Thyroid gland (tissue), 4 donors: ENCODE measurements at regions of chr9 and their contacts with region 1.

Region 1: DNA sequence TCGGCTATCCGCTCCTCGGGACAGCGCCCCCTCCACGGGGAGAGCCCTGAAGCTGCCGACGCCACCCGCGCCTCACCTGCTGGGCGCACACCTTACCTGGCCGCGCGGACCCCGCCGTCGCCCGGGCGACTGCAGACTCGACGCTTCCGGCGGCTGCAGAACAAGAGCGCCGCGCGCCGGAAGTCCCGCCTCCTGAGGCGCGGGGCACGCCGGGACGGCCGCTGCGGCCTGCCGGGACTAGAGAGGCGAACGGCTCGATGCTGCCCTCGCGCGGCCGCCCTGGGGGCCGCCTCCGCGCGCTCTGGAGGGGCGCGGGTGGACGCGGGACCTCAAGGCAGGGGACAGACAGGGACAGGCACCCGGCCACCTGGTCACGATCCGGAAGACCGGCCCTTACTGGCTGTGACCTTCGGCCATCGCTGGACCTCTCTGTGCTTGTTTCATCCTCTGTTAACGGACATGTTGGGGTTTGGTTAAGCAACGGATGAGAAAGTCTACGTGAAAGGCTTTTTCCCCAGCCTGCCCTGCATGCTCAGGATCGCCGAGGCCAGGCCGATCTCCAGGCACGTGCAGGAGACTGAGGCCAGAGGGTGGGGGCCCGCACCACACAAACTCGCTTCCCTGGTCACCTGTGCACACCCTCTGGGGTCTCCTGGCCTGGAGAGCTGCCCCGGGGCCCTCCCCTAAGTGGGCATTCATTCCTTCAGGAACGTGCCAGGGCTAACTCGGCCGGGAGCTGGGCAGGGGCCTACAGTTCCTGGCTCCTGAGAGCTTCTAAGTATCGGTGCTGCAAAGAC is at the start of gene SNAPC4:
- DNase-seq: peak; percentile 82 to 84
- H3K4me3 ChIP-seq: peak within 1 kb of the TSS; percentile 76 to 99 (median 98)
- H3K27ac ChIP-seq: peak within 1 kb of the TSS in 2 of 3 donors; percentile 32 to 41
- H3K4me1 ChIP-seq: peaks cover 16 to 17% of the 10 kb centered on the region in 2 donors
- H3K27me3 ChIP-seq: no peaks in the 10 kb centered on the region
- CTCF ChIP-seq: peak; percentile 52 to 99 (median 92)
- POLR2A ChIP-seq: peak in 1 of 2 donors; percentile 63
- total RNA-seq, gene SNAPC4: 7.0 to 8.0 (median 7.5) TPM

Region 2: GRCh38 chr9:136439550-136440408 is 39.5 kb after region 1 on chr9 and contains the start of gene INPP5E:
- intact Hi-C with region 1: loop called (anchors 5 kb)
- DNase-seq: peak; percentile 68 to 73
- H3K4me3 ChIP-seq: peak within 1 kb of the TSS; percentile 48 to 92 (median 61)
- H3K27ac ChIP-seq: peak within 1 kb of the TSS in 1 of 3 donors; percentile 58
- H3K4me1 ChIP-seq: peaks cover 17 to 25% of the 10 kb centered on the region in 2 donors
- H3K27me3 ChIP-seq: no peaks in the 10 kb centered on the region
- CTCF ChIP-seq: peak in 5 of 6 experiments; percentile 31 to 97 (median 77)
- POLR2A ChIP-seq: peak in 1 of 2 donors; percentile 35
- total RNA-seq, gene INPP5E: 10.2 to 21.3 (median 13.4) TPM